Activated T-helper 1 cell treated with anti-CD3 and anti-CD28 coated beads, Interleukin-12 subunit alpha, Interleukin-12 subunit beta, Interleukin-2, Interleukin-4 antibody, amounts not matched to agents 30 ng/mL and 10 ng/mL and 1 ng/mL, durations not matched to agents 14 hours and 24 hours and 36 hours (primary cell): ENCODE measurements at regions of chr7 and their contacts with region 1.

Region 1: GRCh38 chr7:80216996-80217842 is 82.6 kb downstream of the GNAI1 start:
- DNase-seq: no peak
- H3K4me3 Mint-ChIP-seq: no peak overlapping the region
- H3K27ac Mint-ChIP-seq: no peak overlapping the region
- H3K4me1 Mint-ChIP-seq: no peaks in the 10 kb centered on the region
- H3K27me3 Mint-ChIP-seq: no peaks in the 10 kb centered on the region

Region 2: DNA sequence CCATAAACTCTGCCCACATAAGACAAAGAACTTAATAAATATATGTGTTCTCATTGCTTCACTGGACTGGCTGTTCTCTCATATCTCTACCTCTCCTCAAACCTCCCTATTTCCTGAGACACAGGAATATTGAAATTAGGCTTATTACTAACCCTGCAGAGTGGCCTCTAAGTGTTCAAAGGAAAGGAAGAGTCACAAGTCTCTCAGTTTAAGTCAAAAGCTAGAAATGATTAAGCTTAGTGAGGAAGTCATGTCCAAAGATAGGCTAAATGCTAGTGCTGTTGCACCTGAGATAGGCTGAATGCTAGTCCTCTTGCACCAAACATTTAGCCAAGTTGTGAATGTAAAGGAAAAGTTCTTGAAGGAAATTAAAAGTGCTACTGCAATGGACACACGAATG is 41.5 kb before region 1 on chr7:
- intact Hi-C with region 1: loop called (anchors 1 kb)
- DNase-seq: no peak
- H3K4me3 Mint-ChIP-seq: no peak overlapping the region
- H3K27ac Mint-ChIP-seq: no peak overlapping the region
- H3K4me1 Mint-ChIP-seq: peaks cover 16% of the 10 kb centered on the region
- H3K27me3 Mint-ChIP-seq: no peaks in the 10 kb centered on the region